ENCODE measurements at regions of chr5 and their contacts with region 1.

Region 1: GRCh38 chr5:157820593-157821252 is 38.2 kb downstream of the CLINT1 start:
- DNase-seq: no peak
- H3K4me3 ChIP-seq: no peak overlapping the region
- H3K27ac ChIP-seq: peak overlapping the region; percentile 31 to 41
- H3K4me1 ChIP-seq: peaks cover 0 to 13% of the 10 kb centered on the region in 2 donors
- H3K27me3 ChIP-seq: no peaks in the 10 kb centered on the region
- CTCF ChIP-seq: peak in 2 of 3 experiments; percentile 45 to 60

Region 2: GRCh38 chr5:157917899-157918809 is 97.4 kb after region 1 on chr5:
- intact Hi-C with region 1: loop called (anchors 10 kb)
- DNase-seq: peak in 1 of 2 donors; percentile 73
- H3K4me3 ChIP-seq: no peak overlapping the region
- H3K27ac ChIP-seq: no peak overlapping the region
- H3K4me1 ChIP-seq: peaks cover 0 to 14% of the 10 kb centered on the region in 2 donors
- H3K27me3 ChIP-seq: no peaks in the 10 kb centered on the region
- CTCF ChIP-seq: peak; percentile 5 to 41 (median 19)

Region 3: DNA sequence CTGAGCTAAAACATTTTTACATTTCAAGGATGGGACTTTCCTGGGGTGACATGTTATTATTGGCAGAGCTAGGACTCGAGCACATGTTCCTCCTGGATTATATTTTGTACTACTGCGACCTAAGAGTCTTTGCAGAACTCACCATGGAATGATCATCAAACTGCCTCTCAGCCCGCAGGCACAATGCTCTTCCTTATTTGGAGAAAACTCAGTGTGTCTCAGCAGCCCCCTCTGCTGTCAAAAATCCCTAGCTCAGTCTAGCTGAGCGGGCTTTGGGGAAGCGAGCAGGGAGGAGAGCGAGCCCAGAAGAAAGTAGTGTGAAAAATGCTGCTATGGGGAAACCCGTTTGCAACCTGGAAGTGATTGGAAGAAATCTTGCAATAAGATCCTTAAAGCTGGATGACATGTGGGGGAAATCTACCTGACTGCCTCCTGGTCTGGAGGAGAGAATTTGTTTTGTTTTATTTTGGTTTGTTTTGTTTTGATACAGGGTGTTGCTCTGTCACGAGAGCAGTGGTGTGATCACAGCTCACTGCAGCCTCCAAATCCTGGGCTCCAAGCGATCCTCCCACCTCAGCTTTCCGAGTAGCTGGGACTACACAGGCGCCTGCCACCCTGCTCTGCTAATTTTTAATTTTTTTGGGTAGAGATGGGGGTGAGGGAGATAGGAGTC is 128.2 kb after region 1 on chr5:
- intact Hi-C with region 1: loop called (anchors 1 kb)
- DNase-seq: peak; percentile 64 to 95
- H3K4me3 ChIP-seq: peak overlapping the region in 1 of 2 donors; percentile 33
- H3K27ac ChIP-seq: no peak overlapping the region
- H3K4me1 ChIP-seq: peaks cover 0 to 3% of the 10 kb centered on the region in 2 donors
- H3K27me3 ChIP-seq: no peaks in the 10 kb centered on the region
- CTCF ChIP-seq: peak; percentile 69 to 78 (median 73)

Region 4: GRCh38 chr5:157994906-157995519 is 174.3 kb after region 1 on chr5:
- intact Hi-C with region 1: loop called (anchors 1 kb)
- DNase-seq: peak in 1 of 2 donors; percentile 71
- H3K4me3 ChIP-seq: no peak overlapping the region
- H3K27ac ChIP-seq: no peak overlapping the region
- H3K4me1 ChIP-seq: peaks cover 0 to 4% of the 10 kb centered on the region in 2 donors
- H3K27me3 ChIP-seq: no peaks in the 10 kb centered on the region
- CTCF ChIP-seq: peak; percentile 67 to 74 (median 74)